ENCODE measurements at regions of chr7 and their contacts with region 1.

Region 1: GRCh38 chr7:129530795-129531391 is 28.6 kb downstream of the SMKR1 start:
- DNase-seq: peak; percentile 93
- ATAC-seq: peak; percentile 99
- H3K4me3 ChIP-seq: no peak overlapping the region
- H3K27ac ChIP-seq: peak overlapping the region; percentile 56
- H3K4me1 ChIP-seq: peaks cover 19% of the 10 kb centered on the region
- H3K27me3 ChIP-seq: no peaks in the 10 kb centered on the region
- CTCF ChIP-seq: no peak

Region 2: DNA sequence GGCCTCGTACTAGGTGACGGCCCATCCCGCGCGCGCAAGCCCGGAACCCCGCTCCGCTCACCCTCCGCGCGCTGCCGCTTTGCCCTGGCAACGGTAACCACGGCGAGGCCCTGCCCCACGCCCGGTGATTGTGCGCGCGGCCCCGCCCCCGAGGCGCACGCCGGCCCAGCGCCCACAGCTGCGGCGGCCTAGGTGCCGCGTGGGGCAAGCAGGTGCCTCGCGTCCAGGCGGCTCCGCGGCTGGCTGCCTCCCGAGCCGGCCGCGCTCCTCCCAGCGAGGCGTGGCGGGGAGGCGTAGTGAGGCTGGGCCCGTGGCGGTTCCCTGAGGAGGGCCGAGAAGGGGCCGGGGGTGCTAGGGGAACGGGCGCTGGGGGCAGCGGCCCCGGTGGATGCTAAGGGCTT is 28.5 kb before region 1 on chr7 and contains the start of gene SMKR1:
- CTCF ChIA-PET with region 1: no interaction called
- POLR2A ChIA-PET with region 1: no interaction called
- intact Hi-C with region 1: loop called (anchors 2 kb)
- DNase-seq: peak; percentile 85
- ATAC-seq: peak; percentile 94
- H3K4me3 ChIP-seq: peak within 1 kb of the TSS; percentile 92
- H3K27ac ChIP-seq: no peak within 1 kb of the TSS
- H3K4me1 ChIP-seq: 0 out of 2 replicates have a peak, but pooled peaks cover 8% of the 10 kb centered on the region
- H3K27me3 ChIP-seq: no peaks in the 10 kb centered on the region
- CTCF ChIP-seq: no peak
- total RNA-seq, gene SMKR1: 7.4 and 13.1 TPM in 2 replicates

Region 3: DNA sequence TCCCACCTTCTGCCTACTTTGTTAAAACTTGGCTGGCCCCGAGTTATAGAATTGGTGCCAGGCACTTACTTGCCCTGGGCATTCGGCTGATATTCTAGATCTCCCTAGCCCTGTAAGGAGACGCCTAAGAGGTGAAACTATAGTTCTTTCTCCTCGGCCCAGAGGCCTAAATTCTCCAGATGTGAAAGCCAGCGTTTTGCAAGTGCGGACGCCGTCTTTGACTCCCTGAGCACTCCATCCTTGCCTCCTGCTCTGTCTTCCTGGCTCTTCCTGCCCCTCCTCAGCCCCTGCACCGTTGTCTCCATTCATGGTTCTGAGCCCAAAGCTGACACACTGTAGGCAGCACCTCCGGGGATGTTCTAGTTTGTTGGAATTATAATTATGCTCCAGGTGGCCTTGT is 17.3 kb before region 1 on chr7:
- CTCF ChIA-PET with region 1: no interaction called
- POLR2A ChIA-PET with region 1: no interaction called
- intact Hi-C with region 1: no loop called
- DNase-seq: no peak
- ATAC-seq: no peak
- H3K4me3 ChIP-seq: no peak overlapping the region
- H3K27ac ChIP-seq: no peak overlapping the region
- H3K4me1 ChIP-seq: no peaks in the 10 kb centered on the region
- H3K27me3 ChIP-seq: no peaks in the 10 kb centered on the region
- CTCF ChIP-seq: no peak

Region 4: GRCh38 chr7:129597672-129598071 is 66.8 kb after region 1 on chr7:
- CTCF ChIA-PET with region 1: no interaction called
- POLR2A ChIA-PET with region 1: no interaction called
- intact Hi-C with region 1: loop called (anchors 5 kb)
- DNase-seq: no peak
- ATAC-seq: no peak
- H3K4me3 ChIP-seq: no peak overlapping the region
- H3K27ac ChIP-seq: no peak overlapping the region
- H3K4me1 ChIP-seq: no peaks in the 10 kb centered on the region
- H3K27me3 ChIP-seq: no peaks in the 10 kb centered on the region
- CTCF ChIP-seq: no peak

Measured in PC-3 (cell line).